ENCODE measurements at regions of chr17 and their contacts with region 1.

Region 1: DNA sequence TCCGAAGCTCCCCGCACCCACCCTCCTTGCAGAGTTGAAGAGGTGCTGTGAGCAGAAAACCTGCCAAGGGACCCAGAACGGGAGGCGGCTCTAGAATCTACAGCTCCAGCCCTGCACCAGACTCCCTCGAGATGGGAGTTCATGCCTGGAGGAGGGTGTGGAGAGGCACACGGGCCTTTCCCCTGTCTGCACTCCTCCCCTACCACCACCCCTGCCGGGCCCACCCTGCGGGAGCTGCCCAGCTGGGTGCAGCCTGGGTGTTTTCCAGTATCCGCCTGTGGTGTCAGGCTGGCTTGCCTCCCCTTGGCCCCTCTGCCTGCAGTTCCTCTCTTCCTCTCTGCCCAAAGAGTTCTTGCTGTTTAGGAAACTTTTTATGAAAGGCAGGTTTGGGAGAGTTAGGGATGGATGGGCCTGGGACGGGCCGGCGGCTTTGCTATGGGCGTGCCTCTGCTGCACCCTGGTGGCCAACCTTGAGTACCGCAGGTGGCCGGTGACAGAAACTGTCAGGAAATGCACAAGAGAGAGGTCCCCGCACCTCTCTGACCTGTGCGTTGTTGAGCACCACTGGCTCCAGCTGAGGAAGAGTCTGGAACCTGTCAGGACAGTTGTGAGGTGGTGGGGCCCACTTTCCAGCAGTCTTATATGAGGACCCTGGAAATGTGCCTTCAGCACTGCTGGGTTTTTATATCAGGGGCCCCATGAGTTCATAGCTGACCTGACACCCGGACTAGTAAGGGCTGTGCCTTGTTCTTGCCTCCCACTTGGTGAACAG is 354.1 kb downstream of the SEC14L1 start:
- DNase-seq: peak; percentile 58 to 79
- ATAC-seq: peak; percentile 73

Region 2: DNA sequence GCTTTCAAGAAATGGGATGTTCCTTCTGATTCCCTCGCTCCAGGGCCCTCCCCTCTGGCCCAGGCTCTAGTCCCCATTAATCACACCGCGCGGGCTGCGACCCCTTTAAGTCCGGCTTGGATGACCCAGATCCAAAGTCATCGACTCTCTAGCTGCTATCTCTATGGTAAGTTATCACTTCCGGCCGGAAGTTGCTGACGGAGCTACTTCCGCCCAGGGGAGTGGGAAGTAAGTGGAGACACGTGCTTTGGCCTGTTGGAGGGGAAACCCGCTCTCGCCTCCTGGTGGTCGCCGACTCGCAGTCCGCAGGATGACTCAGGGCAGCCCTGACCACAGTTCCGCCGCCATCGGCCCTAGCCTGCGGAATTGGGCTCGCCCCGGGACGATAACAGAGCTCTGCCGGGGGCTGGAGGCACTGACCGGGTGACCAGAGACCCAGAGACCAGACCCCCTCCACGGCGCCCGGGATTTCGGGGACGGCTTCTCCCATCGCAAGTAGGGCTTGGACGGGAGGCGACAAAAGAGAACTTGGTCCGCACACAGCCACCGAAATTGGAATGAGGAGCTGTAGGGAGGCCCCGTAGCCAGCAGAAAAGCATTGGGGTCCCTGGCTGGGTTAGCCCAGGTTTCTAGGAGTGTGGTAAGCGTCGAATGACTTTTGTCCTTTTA is 406.3 kb before region 1 on chr17:
- intact Hi-C with region 1: loop called in 1 of 2 experiments (anchors 10 kb)
- DNase-seq: peak; percentile 92 to 94
- ATAC-seq: peak; percentile 95

Region 3: GRCh38 chr17:77147357-77147801 is 347.5 kb before region 1 on chr17:
- intact Hi-C with region 1: no loop called
- DNase-seq: no peak
- ATAC-seq: peak; percentile 41

Region 4: DNA sequence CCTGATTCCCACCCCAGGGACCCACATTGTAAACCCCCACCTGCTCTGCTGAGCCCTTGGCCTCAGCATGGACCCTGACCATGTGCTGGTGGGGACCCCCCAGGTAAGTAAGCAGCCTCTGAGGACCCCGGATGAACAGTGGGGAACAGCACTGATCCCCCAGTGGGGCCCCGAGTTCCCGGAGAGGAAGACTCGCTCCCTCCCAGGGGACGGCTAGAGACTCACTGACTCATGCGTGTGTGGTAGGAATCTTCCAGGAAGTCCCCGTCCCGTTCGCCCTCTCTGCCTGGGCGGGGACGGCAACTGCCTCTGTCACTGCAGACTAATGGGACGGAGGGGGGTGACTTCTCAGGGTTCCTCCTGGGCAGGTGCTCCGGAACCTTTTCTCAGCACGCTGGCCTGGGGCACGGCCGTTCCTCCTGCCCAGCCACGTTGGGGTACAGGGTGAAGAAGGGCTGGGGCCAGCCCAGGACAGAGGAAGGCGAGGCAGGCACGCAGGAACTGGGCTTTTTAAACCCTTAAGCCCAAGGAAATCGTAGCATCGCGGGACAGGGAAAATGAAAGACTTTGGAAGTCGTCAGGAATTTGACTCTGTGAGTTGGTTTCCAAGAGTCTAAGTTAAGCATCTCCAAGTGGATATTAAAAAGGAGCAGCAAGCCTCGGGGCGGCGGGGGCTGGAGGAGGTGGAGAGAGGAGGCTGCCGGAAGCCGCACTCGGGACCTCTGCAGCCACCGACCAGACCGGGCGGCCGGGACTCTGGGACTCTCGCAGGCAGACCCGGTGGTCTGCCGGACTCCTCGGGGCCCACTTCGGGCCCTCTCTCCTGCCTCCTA is 175.4 kb before region 1 on chr17:
- intact Hi-C with region 1: loop called in 1 of 2 experiments (anchors 10 kb)
- DNase-seq: peak; percentile 90 to 95
- ATAC-seq: peak; percentile 94

Region 5: DNA sequence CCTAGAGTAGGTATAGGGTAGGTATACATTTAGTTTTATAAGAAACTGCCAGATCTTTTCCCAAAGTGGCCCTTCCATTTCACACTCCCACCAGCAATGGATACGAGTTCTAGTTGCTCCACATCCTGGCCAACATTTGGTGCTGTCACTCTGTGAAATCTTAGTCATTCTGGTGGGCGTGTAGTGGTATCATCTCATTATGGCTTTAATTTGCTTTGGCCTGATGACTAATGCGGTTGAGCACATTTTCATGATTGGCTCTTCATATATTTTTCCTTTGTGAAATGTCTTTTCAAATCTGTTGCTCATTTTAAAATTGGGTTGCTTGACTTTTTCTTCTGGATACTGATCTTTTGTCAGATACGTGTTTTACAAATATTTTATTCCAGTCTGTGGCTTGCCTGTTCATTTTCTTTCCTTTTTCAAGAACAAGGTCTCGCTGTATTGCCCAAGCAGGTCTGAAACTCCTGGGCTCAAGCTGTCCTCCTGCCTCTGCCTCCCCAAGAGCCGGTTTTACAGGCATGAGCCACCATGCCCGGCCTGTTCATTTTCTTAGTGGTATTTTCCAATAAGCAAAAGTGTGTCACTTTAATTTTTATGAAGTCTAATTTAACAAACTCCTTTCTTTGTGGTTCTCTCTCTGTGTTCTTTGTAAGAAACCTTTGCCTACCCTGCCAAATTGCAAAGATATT is 161.7 kb before region 1 on chr17:
- intact Hi-C with region 1: loop called (anchors 2 to 10 kb)
- DNase-seq: peak in 1 of 2 donors; percentile 21
- ATAC-seq: no peak

Region 6: GRCh38 chr17:77429919-77430752 is 64.7 kb before region 1 on chr17:
- intact Hi-C with region 1: loop called in 1 of 2 experiments (anchors 5 kb)
- DNase-seq: peak; percentile 90
- ATAC-seq: peak; percentile 64

Region 7: GRCh38 chr17:77444984-77445759 is 49.7 kb before region 1 on chr17:
- intact Hi-C with region 1: no loop called
- DNase-seq: peak; percentile 69 to 82
- ATAC-seq: peak; percentile 28

Region 8: GRCh38 chr17:77692571-77693161 is 197.8 kb after region 1 on chr17:
- intact Hi-C with region 1: no loop called
- DNase-seq: no peak
- ATAC-seq: no peak